SK-N-SH (cell line): ENCODE measurements at regions of chr4 and their contacts with region 1.

Region 1: GRCh38 chr4:41887821-41888686 is 47.2 kb upstream of the TMEM33 start:
- DNase-seq: no peak
- H3K4me3 ChIP-seq: no peak overlapping the region; a peak in 1 of 4 replicates
- H3K27ac ChIP-seq: peak overlapping the region in 1 of 2 experiments; percentile 99; a peak in 2 of 4 replicates
- H3K4me1 ChIP-seq: peaks cover 0 to 39% of the 10 kb centered on the region in 2 experiments; a peak in 2 of 4 replicates
- H3K27me3 ChIP-seq: peaks cover 10% of the 10 kb centered on the region; the same call in 1 of the 2 replicates
- CTCF ChIP-seq: peak; percentile 98
- EP300 ChIP-seq: peak in 1 of 2 experiments; percentile 64; a peak in 1 of 4 replicates
- RAD21 ChIP-seq: peak; percentile 82

Region 2: DNA sequence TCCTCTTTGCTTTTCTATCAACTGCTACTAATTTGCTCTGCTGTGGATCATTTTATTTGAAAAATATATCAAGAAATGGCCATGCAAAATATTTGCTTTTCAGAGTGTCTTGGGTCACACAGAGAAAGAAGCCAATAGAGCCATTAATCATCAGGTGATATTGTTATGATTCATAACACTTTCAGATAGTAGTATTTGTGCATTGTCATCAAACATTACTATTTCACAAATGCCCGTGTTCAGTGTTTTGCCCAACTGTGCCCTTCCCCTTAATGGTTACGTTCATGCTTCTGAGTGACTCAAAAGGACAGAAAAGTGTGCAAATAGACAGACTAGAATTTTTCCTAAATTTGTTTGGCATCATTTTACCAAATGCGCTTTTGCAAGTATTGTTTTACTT is 186.1 kb before region 1 on chr4:
- CTCF ChIA-PET with region 1: interaction called, 21 read pairs
- POLR2A ChIA-PET with region 1: no interaction called
- DNase-seq: no peak
- H3K4me3 ChIP-seq: no peak overlapping the region
- H3K27ac ChIP-seq: no peak overlapping the region
- H3K4me1 ChIP-seq: no peaks in the 10 kb centered on the region
- H3K27me3 ChIP-seq: no peaks in the 10 kb centered on the region
- CTCF ChIP-seq: no peak
- EP300 ChIP-seq: no peak
- RAD21 ChIP-seq: no peak

Region 3: GRCh38 chr4:42159271-42160001 is 271.4 kb after region 1 on chr4:
- CTCF ChIA-PET with region 1: no interaction called
- POLR2A ChIA-PET with region 1: no interaction called
- DNase-seq: no peak
- H3K4me3 ChIP-seq: no peak overlapping the region
- H3K27ac ChIP-seq: no peak overlapping the region
- H3K4me1 ChIP-seq: no peaks in the 10 kb centered on the region
- H3K27me3 ChIP-seq: no peaks in the 10 kb centered on the region; the same call in 1 of the 2 replicates
- CTCF ChIP-seq: no peak
- EP300 ChIP-seq: no peak
- RAD21 ChIP-seq: no peak

Region 4: GRCh38 chr4:42845586-42845985 is 957.5 kb after region 1 on chr4:
- CTCF ChIA-PET with region 1: no interaction called
- POLR2A ChIA-PET with region 1: no interaction called
- DNase-seq: no peak
- H3K4me3 ChIP-seq: no peak overlapping the region
- H3K27ac ChIP-seq: no peak overlapping the region
- H3K4me1 ChIP-seq: no peaks in the 10 kb centered on the region
- H3K27me3 ChIP-seq: no peaks in the 10 kb centered on the region
- CTCF ChIP-seq: no peak
- EP300 ChIP-seq: no peak
- RAD21 ChIP-seq: no peak